Posterior vena cava (tissue), 2 donors: ENCODE measurements at regions of chr12 and their contacts with region 1.

Region 1: GRCh38 chr12:9971181-9971580 is at the start of gene CLEC12A:
- DNase-seq: no peak
- total RNA-seq, gene CLEC12A: 2.0 to 5.0 TPM

Region 2: DNA sequence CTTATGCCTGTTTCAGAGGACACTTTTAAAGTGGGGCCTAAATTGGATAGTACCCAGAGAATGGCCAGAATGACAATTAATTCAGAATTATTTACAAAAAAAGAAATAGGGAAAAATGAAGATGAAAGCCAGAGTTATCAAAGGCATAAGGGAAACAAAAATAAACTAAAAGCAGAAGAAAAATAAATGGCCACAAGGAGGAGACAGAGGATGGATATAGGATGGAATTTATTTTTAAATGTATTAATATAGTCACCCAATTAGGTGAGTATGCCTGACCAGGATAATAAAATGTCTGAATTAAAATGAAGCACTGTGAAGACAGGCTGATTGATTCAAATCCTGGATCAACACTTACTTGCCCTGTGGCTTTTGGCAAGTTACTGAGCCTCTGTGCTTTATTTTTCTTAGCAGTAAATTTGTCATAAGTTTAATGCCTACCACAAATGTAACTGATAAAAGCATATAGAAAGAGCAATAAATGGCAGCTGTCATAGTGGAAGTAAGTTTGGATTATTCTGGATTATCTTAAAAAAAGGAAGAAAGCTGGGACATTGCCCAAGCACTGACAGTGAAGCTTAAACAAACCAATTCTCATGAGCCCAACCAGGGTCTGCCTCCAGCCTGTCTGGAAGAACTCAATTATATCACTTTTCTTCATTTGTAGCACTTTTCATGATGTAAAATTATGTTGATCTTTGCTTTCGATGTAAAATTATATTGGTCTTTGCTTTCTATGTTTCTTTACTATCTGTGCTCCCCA is 62.8 kb after region 1 on chr12:
- intact Hi-C with region 1: loop called in 1 of 2 experiments (anchors 2 kb)
- DNase-seq: no peak